Left cardiac atrium (tissue), 4 donors: ENCODE measurements at regions of chr22 and their contacts with region 1.

Region 1: GRCh38 chr22:17830043-17830961 is 56.0 kb upstream of the BID start:
- DNase-seq: peak; percentile 83
- ATAC-seq: peak; percentile 83 to 84

Region 2: DNA sequence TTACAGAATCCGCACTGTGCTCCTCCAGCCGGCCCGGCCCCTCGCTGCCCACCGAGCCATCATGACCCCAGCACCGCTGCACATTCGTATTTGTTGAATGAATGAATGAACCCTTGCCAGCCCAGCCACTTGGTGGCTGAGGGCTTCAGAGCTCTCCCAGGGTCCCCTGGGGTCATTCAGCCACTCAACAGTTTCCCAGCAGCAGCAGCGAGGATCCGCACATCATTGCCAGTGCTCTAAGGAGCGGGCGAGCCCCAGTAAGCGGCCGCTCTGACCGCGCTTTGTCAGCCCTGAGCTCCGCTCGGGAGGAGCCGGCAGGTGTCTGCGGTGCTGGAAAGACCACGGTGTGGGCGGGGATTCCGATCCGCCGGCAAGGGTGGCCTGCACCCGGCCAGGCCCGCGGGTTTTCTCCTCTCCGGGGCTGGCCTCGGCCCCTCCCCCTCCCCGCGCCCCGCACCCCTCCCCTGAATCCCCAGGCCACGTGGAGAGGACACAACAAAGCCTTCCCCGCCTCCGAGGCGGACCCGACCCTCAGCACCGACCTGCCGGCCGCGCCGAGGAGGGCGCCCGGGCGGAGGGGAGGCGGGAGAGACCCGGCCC is 56.6 kb before region 1 on chr22:
- intact Hi-C with region 1: no loop called
- DNase-seq: peak; percentile 50
- ATAC-seq: peak; percentile 38 to 62

Region 3: GRCh38 chr22:17872471-17872870 is 42.2 kb after region 1 on chr22:
- intact Hi-C with region 1: loop called in 1 of 2 experiments (anchors 5 kb)
- DNase-seq: no peak
- ATAC-seq: no peak

Region 4: GRCh38 chr22:17884084-17884483 is 53.8 kb after region 1 on chr22:
- intact Hi-C with region 1: loop called in 1 of 2 experiments (anchors 5 kb)
- DNase-seq: no peak
- ATAC-seq: no peak

Region 5: GRCh38 chr22:17891481-17892167 is 61.3 kb after region 1 on chr22:
- intact Hi-C with region 1: loop called in 1 of 2 experiments (anchors 2 kb)
- DNase-seq: peak; percentile 62
- ATAC-seq: peak; percentile 71 to 85

Region 6: GRCh38 chr22:17910561-17911311 is 80.4 kb after region 1 on chr22:
- intact Hi-C with region 1: loop called in 1 of 2 experiments (anchors 5 kb)
- DNase-seq: peak; percentile 86
- ATAC-seq: peak; percentile 89 to 91

Region 7: GRCh38 chr22:18077639-18078328 is 247.5 kb after region 1 on chr22 and contains the start of gene PEX26:
- intact Hi-C with region 1: loop called (anchors 1 to 5 kb)
- DNase-seq: peak; percentile 96
- ATAC-seq: peak; percentile 99
- total RNA-seq, gene PEX26: 21.6 to 22.5 TPM